ENCODE measurements at regions of chr1 and their contacts with region 1.

Region 1: GRCh38 chr1:200488375-200489165 is 78.7 kb upstream of the ZNF281 start:
- DNase-seq: peak in 1 of 2 experiments; percentile 67
- H3K4me3 ChIP-seq: peak overlapping the region in 1 of 4 experiments; percentile 33; a peak in 3 of 8 replicates
- H3K27ac ChIP-seq: no peak overlapping the region
- H3K4me1 ChIP-seq: peaks cover 0 to 2% (median under 1%) of the 10 kb centered on the region in 4 experiments; a peak in 1 of 7 replicates
- H3K27me3 ChIP-seq: no peaks in the 10 kb centered on the region
- CTCF ChIP-seq: peak in 2 of 3 experiments; percentile 69 to 83; a peak in 3 of 4 replicates
- EP300 ChIP-seq: no peak
- POLR2A ChIP-seq: no peak
- RAD21 ChIP-seq: peak; percentile 92 to 94

Region 2: GRCh38 chr1:200290010-200290685 is 198.4 kb before region 1 on chr1:
- CTCF ChIA-PET with region 1: interaction called, 76 read pairs
- POLR2A ChIA-PET with region 1: no interaction called
- DNase-seq: no peak
- H3K4me3 ChIP-seq: no peak overlapping the region
- H3K27ac ChIP-seq: no peak overlapping the region
- H3K4me1 ChIP-seq: peaks cover 0 to 3% (median 2%) of the 10 kb centered on the region in 4 experiments; a peak in 4 of 7 replicates
- H3K27me3 ChIP-seq: peaks cover 0 to 7% (median 2%) of the 10 kb centered on the region in 4 experiments; a peak in 3 of 7 replicates
- CTCF ChIP-seq: peak; percentile 19 to 49 (median 47)
- EP300 ChIP-seq: no peak
- POLR2A ChIP-seq: no peak
- RAD21 ChIP-seq: peak; percentile 39 to 62

Region 3: GRCh38 chr1:200372080-200372884 is 116.3 kb before region 1 on chr1:
- CTCF ChIA-PET with region 1: interaction called, 12 read pairs
- POLR2A ChIA-PET with region 1: no interaction called
- DNase-seq: peak; percentile 36 to 43
- H3K4me3 ChIP-seq: peak overlapping the region in 1 of 4 experiments; percentile 56; a peak in 1 of 8 replicates
- H3K27ac ChIP-seq: no peak overlapping the region
- H3K4me1 ChIP-seq: peaks cover 2 to 25% (median 11%) of the 10 kb centered on the region in 4 experiments; a peak in 6 of 7 replicates
- H3K27me3 ChIP-seq: no peaks in the 10 kb centered on the region
- CTCF ChIP-seq: no peak
- EP300 ChIP-seq: no peak
- POLR2A ChIP-seq: no peak
- RAD21 ChIP-seq: no peak

Measured in H1 (cell line).